GM12878 (cell line): ENCODE measurements at regions of chr7 and their contacts with region 1.

Region 1: DNA sequence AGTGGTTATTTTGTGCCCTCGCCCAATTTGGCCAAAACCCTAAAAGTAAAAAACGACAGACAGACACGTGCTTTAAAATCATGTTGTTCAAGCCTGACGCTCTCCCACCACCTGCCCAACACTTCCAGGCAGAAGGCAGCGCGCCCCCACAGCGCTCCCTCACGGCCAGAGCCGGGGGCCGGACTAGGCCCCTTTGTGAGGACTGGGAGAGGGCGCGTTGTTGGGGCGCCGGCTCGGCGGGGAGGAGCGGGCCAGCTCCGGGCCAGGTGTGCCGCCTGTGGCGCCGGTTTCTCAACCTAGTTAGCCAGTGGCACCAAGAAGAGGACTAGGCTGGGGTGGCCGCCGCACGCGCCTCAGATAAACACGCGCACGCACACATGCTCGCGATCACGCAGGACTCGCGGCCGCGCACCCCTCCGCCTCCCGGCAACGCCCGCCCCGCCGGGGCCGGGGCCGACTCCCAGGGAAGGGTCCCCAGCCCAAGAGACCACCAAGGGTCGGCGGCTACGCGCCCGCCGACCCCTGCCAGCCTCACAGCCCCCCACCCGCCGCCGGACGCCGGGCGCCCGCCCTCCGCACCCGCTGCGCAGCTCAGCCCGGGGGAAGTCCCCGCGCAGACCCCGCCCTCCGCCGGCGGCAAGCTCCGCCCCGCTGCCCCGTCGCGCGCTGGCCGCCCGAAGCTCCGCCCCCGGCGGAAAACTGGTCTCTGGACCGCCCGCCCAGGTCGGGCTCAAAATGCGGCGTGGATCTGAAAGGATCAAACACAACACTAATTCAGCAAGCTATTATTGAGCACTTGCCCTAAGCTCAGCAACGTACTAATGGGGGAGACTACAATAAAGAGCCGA is at the start of gene IMMP2L:
- DNase-seq: peak; percentile 46
- ATAC-seq: peak; percentile 90
- H3K4me3 ChIP-seq: peak within 1 kb of the TSS; percentile 71
- H3K27ac ChIP-seq: peak within 1 kb of the TSS; percentile 84
- H3K4me1 ChIP-seq: peaks cover 11% of the 10 kb centered on the region
- H3K27me3 ChIP-seq: no peaks in the 10 kb centered on the region
- CTCF ChIP-seq: peak; percentile 41 to 51 (median 44); a peak in 4 of 6 replicates
- EP300 ChIP-seq: no peak
- POLR2A ChIP-seq: peak; percentile 83
- RAD21 ChIP-seq: peak; percentile 65
- polyA plus RNA-seq, gene IMMP2L: 41.8 to 46.3 TPM

Region 2: GRCh38 chr7:111486472-111487142 is 75.5 kb before region 1 on chr7:
- CTCF ChIA-PET with region 1: no interaction called
- POLR2A ChIA-PET with region 1: no interaction called
- RAD21 ChIA-PET with region 1: interaction called, 3 read pairs
- SMC1A ChIA-PET with region 1: interaction called, 7 read pairs
- in situ Hi-C with region 1: no loop called
- intact Hi-C with region 1: loop called (anchors 5 kb)
- DNase-seq: peak; percentile 13
- ATAC-seq: peak; percentile 72
- H3K4me3 ChIP-seq: no peak overlapping the region
- H3K27ac ChIP-seq: no peak overlapping the region
- H3K4me1 ChIP-seq: no peaks in the 10 kb centered on the region
- H3K27me3 ChIP-seq: no peaks in the 10 kb centered on the region
- CTCF ChIP-seq: peak; percentile 60 to 75 (median 69)
- EP300 ChIP-seq: no peak
- POLR2A ChIP-seq: no peak
- RAD21 ChIP-seq: peak; percentile 83

Region 3: GRCh38 chr7:111508387-111508786 is 53.7 kb before region 1 on chr7:
- CTCF ChIA-PET with region 1: interaction called, 18 read pairs
- POLR2A ChIA-PET with region 1: no interaction called
- RAD21 ChIA-PET with region 1: interaction called, 16 read pairs
- SMC1A ChIA-PET with region 1: interaction called, 6 read pairs
- in situ Hi-C with region 1: no loop called
- intact Hi-C with region 1: no loop called
- DNase-seq: no peak
- ATAC-seq: peak; percentile 98
- H3K4me3 ChIP-seq: no peak overlapping the region
- H3K27ac ChIP-seq: no peak overlapping the region
- H3K4me1 ChIP-seq: no peaks in the 10 kb centered on the region
- H3K27me3 ChIP-seq: no peaks in the 10 kb centered on the region
- CTCF ChIP-seq: no peak
- EP300 ChIP-seq: no peak
- POLR2A ChIP-seq: no peak
- RAD21 ChIP-seq: no peak

Region 4: GRCh38 chr7:111527545-111527944 is 34.6 kb before region 1 on chr7:
- CTCF ChIA-PET with region 1: interaction called, 6 read pairs
- POLR2A ChIA-PET with region 1: interaction called, 6 read pairs
- RAD21 ChIA-PET with region 1: interaction called, 12 read pairs
- SMC1A ChIA-PET with region 1: interaction called, 39 read pairs
- in situ Hi-C with region 1: no loop called
- intact Hi-C with region 1: loop called (anchors 1 kb)
- DNase-seq: peak; percentile 40
- ATAC-seq: peak; percentile 88
- H3K4me3 ChIP-seq: peak overlapping the region; percentile 28; the same call in 1 of the 2 replicates
- H3K27ac ChIP-seq: peak overlapping the region; percentile 3; the same call in 1 of the 2 replicates
- H3K4me1 ChIP-seq: peaks cover 25% of the 10 kb centered on the region
- H3K27me3 ChIP-seq: no peaks in the 10 kb centered on the region
- CTCF ChIP-seq: no peak
- EP300 ChIP-seq: peak; percentile 49 to 72; a peak in 2 of 4 replicates
- POLR2A ChIP-seq: no peak
- RAD21 ChIP-seq: peak; percentile 25; the same call in 1 of the 2 replicates

Region 5: DNA sequence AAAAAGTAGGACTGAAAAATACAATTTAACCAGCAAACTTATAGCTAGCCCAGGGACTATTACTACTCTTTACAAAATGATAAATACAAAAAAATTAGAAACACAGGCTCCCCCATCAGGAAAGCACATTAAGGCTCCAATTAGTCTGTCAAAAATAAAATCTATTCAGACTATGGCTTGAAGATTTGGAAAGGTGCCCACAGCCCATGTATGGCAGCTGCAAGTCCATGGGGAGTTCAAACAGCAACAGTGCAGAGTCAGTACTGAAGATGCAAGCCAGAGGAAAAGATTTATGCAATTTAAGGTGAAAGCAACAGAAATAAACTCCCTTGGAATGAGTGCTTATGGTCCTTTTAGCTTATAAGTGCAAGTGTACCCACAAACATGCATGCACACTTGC is 29.5 kb before region 1 on chr7:
- CTCF ChIA-PET with region 1: interaction called, 6 read pairs
- POLR2A ChIA-PET with region 1: interaction called, 9 read pairs
- RAD21 ChIA-PET with region 1: interaction called, 12 read pairs
- SMC1A ChIA-PET with region 1: interaction called, 39 read pairs
- in situ Hi-C with region 1: no loop called
- intact Hi-C with region 1: loop called (anchors 1 kb)
- DNase-seq: no peak
- ATAC-seq: no peak
- H3K4me3 ChIP-seq: no peak overlapping the region
- H3K27ac ChIP-seq: no peak overlapping the region
- H3K4me1 ChIP-seq: peaks cover 18% of the 10 kb centered on the region
- H3K27me3 ChIP-seq: no peaks in the 10 kb centered on the region
- CTCF ChIP-seq: no peak
- EP300 ChIP-seq: no peak
- POLR2A ChIP-seq: no peak
- RAD21 ChIP-seq: no peak

Region 6: GRCh38 chr7:111540199-111540815 is 21.8 kb before region 1 on chr7:
- CTCF ChIA-PET with region 1: interaction called, 3 read pairs
- POLR2A ChIA-PET with region 1: interaction called, 9 read pairs
- RAD21 ChIA-PET with region 1: no interaction called
- SMC1A ChIA-PET with region 1: interaction called, 10 read pairs
- in situ Hi-C with region 1: no loop called
- intact Hi-C with region 1: no loop called
- DNase-seq: no peak
- ATAC-seq: no peak
- H3K4me3 ChIP-seq: no peak overlapping the region
- H3K27ac ChIP-seq: no peak overlapping the region
- H3K4me1 ChIP-seq: no peaks in the 10 kb centered on the region
- H3K27me3 ChIP-seq: no peaks in the 10 kb centered on the region
- CTCF ChIP-seq: no peak
- EP300 ChIP-seq: no peak
- POLR2A ChIP-seq: no peak
- RAD21 ChIP-seq: no peak